ENCODE measurements at regions of chr11 and their contacts with region 1.

Region 1: GRCh38 chr11:106021967-106022794 is at the start of gene MSANTD4:
- DNase-seq: peak; percentile 96
- H3K4me3 Mint-ChIP-seq: peak within 1 kb of the TSS; percentile 89
- H3K27ac Mint-ChIP-seq: peak within 1 kb of the TSS; percentile 90
- H3K4me1 Mint-ChIP-seq: peaks cover 36% of the 10 kb centered on the region
- H3K27me3 Mint-ChIP-seq: peaks cover 2% of the 10 kb centered on the region
- total RNA-seq, gene MSANTD4: 17.2 and 22.0 TPM in 2 replicates

Region 2: GRCh38 chr11:106063009-106063408 is 40.8 kb after region 1 on chr11:
- intact Hi-C with region 1: loop called (anchors 5 kb)
- DNase-seq: no peak
- H3K4me3 Mint-ChIP-seq: no peak overlapping the region
- H3K27ac Mint-ChIP-seq: no peak overlapping the region
- H3K4me1 Mint-ChIP-seq: peaks cover 13% of the 10 kb centered on the region
- H3K27me3 Mint-ChIP-seq: no peaks in the 10 kb centered on the region

Region 3: DNA sequence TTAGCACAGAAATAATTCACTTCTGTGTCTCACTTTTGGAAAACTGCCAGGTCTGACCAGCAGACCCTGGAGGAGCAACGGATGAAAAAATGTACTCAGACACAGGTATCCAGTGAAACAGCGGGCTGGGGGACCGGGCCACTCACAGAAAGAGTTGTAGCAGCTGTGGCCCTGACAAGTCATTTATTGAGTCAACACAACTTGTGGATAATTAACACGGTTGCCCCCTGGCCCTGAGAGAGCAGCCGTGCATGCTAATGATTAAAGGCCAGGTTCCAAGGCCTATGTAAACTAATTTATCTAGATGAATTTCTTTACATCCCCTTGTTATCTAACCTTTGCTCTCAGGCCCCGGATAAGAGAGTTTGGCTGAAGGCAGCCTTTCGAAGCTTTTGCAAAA is 186.6 kb after region 1 on chr11:
- intact Hi-C with region 1: no loop called
- DNase-seq: no peak
- H3K4me3 Mint-ChIP-seq: no peak overlapping the region
- H3K27ac Mint-ChIP-seq: no peak overlapping the region
- H3K4me1 Mint-ChIP-seq: no peaks in the 10 kb centered on the region
- H3K27me3 Mint-ChIP-seq: no peaks in the 10 kb centered on the region